ENCODE measurements at regions of chr15 and their contacts with region 1.

Region 1: GRCh38 chr15:69468241-69469121 is 15.9 kb downstream of the RPLP1 start:
- DNase-seq: peak in 1 of 2 experiments; percentile 47
- H3K4me3 ChIP-seq: no peak overlapping the region
- H3K4me3 Mint-ChIP-seq: peak overlapping the region; percentile 48
- H3K27ac Mint-ChIP-seq: peak overlapping the region; percentile 67
- H3K4me1 ChIP-seq: peaks cover 47% of the 10 kb centered on the region
- H3K4me1 Mint-ChIP-seq: peaks cover 26% of the 10 kb centered on the region
- H3K27me3 ChIP-seq: no peaks in the 10 kb centered on the region
- H3K27me3 Mint-ChIP-seq: no peaks in the 10 kb centered on the region
- CTCF ChIP-seq: no peak

Region 2: DNA sequence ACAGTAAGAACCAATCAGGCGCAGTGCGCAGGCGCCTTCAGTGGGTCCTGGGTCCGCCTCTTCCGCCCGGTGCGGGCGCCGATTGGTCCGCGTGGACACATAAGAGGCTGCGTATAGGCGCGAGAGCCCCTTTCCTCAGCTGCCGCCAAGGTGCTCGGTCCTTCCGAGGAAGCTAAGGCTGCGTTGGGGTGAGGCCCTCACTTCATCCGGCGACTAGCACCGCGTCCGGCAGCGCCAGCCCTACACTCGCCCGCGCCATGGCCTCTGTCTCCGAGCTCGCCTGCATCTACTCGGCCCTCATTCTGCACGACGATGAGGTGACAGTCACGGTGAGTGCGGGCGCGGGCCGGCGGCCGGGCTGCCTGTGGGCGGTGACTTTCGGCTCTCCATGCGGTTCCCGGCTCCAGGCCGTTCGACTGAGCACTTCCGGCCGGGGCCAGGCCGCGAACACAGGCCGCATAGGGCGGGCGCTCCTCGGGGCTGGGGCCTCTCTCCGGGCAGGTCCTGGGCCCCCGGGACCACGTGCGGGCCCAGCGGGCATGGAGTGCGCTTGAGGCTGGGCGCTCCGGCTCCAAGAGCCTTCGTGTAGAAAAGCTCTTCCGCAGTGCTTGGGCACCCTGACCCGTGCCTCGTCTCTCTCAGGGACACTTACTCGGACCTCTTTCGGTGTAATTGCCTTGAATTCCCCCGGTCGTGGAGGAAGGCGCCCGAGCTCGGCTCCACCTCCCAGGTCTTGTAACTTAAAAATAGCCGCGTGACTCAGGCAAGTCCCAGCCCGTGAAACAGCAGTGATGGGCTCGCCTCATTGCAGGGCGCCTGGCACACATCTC is 15.6 kb before region 1 on chr15 and contains the start of gene RPLP1:
- CTCF ChIA-PET with region 1: interaction called, 28 read pairs
- POLR2A ChIA-PET with region 1: interaction called, 84 read pairs
- intact Hi-C with region 1: no loop called
- DNase-seq: peak; percentile 92 to 95
- H3K4me3 ChIP-seq: peak within 1 kb of the TSS; percentile 78
- H3K4me3 Mint-ChIP-seq: peak within 1 kb of the TSS; percentile 88
- H3K27ac Mint-ChIP-seq: peak within 1 kb of the TSS; percentile 93
- H3K4me1 ChIP-seq: peaks cover 7% of the 10 kb centered on the region; the same call in 1 of the 2 replicates
- H3K4me1 Mint-ChIP-seq: peaks cover 12% of the 10 kb centered on the region
- H3K27me3 ChIP-seq: no peaks in the 10 kb centered on the region
- H3K27me3 Mint-ChIP-seq: no peaks in the 10 kb centered on the region
- CTCF ChIP-seq: no peak
- total RNA-seq, gene RPLP1: 1,587 and 1,689 TPM in 2 replicates

Region 3: GRCh38 chr15:69554256-69554961 is 85.9 kb after region 1 on chr15:
- CTCF ChIA-PET with region 1: interaction called, 6 read pairs
- POLR2A ChIA-PET with region 1: no interaction called
- intact Hi-C with region 1: loop called (anchors 1 kb)
- DNase-seq: peak; percentile 88 to 94
- H3K4me3 ChIP-seq: no peak overlapping the region
- H3K4me3 Mint-ChIP-seq: no peak overlapping the region
- H3K27ac Mint-ChIP-seq: peak overlapping the region; percentile 61
- H3K4me1 ChIP-seq: peaks cover 44% of the 10 kb centered on the region
- H3K4me1 Mint-ChIP-seq: peaks cover 29% of the 10 kb centered on the region
- H3K27me3 ChIP-seq: no peaks in the 10 kb centered on the region
- H3K27me3 Mint-ChIP-seq: peaks cover 8% of the 10 kb centered on the region
- CTCF ChIP-seq: no peak

Region 4: DNA sequence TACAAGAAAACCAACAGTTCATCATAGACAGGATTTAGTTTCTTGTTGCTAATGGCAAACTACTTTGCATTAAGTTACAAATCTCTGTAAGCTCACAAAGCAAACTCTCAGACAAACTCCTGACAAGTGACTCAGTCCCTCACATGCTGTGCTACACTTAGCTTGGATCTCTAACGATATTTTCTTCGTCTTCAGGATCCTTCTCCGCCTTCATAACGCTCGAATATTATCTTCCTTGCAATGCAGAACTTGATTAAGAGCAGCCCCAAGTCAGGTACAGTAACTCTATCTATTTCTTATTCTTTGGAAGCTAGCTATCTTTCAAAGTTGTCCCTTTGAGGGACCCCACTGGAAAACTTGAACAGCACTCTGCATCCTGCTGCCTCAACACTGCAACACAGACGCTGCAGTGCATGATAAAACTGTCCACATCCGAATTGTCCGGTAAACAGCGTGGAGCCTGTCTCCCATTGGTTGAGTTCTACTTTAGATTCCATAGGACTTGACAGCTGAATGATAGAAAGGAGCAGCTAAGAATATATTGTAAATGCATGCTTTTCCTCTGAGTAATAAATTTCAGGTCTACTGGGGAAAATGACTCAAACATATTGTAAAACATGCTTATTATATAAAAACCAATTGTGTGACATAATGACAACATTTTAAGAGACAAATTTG is 1233.5 kb after region 1 on chr15:
- CTCF ChIA-PET with region 1: no interaction called
- POLR2A ChIA-PET with region 1: no interaction called
- intact Hi-C with region 1: loop called (anchors 5 kb)
- DNase-seq: no peak
- H3K4me3 ChIP-seq: no peak overlapping the region
- H3K4me3 Mint-ChIP-seq: peak overlapping the region; percentile 62
- H3K27ac Mint-ChIP-seq: peak overlapping the region; percentile 64
- H3K4me1 ChIP-seq: peaks cover 82% of the 10 kb centered on the region
- H3K4me1 Mint-ChIP-seq: peaks cover 66% of the 10 kb centered on the region
- H3K27me3 ChIP-seq: no peaks in the 10 kb centered on the region
- H3K27me3 Mint-ChIP-seq: no peaks in the 10 kb centered on the region
- CTCF ChIP-seq: no peak